AG04450 (cell line): ENCODE measurements at regions of chr21 and their contacts with region 1.

Region 1: GRCh38 chr21:33752260-33752659 is 110.0 kb downstream of the ITSN1 start:
- DNase-seq: no peak
- H3K4me3 ChIP-seq: no peak overlapping the region
- H3K27ac ChIP-seq: no peak overlapping the region
- H3K27me3 ChIP-seq: no peaks in the 10 kb centered on the region
- CTCF ChIP-seq: no peak

Region 2: GRCh38 chr21:33655591-33656221 is 96.6 kb before region 1 on chr21:
- CTCF ChIA-PET with region 1: interaction called, 11 read pairs
- POLR2A ChIA-PET with region 1: no interaction called
- DNase-seq: peak; percentile 88
- H3K4me3 ChIP-seq: no peak overlapping the region
- H3K27ac ChIP-seq: peak overlapping the region; percentile 82
- H3K27me3 ChIP-seq: no peaks in the 10 kb centered on the region
- CTCF ChIP-seq: no peak